Tibial artery (tissue), 4 donors: ENCODE measurements at regions of chr16 and their contacts with region 1.

Region 1: DNA sequence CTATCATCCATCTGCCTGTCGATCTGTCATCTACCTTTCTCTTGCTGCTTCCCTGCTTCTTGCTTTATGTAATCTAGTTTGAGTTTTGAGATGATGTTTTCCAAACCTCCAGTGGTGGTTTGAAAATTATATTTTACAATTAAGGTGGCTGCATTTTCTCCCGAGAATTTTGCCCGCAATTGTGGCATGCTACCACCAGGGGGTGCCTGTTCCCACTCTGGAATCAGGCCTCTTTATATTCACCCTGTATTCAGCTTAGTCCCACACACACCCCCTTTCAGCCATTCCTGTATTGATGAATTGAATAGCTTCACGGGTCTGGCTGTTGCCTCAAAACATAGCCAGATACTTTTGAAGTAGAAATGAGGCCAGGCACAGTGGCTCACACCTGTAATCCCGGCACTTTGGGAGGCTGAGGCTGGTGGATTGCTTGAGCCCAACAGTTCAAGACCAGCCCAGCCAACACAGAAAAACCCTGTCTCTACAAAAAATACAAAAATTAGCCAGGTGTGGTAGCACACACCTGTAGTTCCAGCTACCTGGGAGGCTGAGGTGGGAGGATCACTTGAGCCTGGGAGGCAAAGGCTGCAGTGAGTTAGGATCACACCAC is 3.2 kb downstream of the PRSS22 start:
- DNase-seq: no peak
- H3K4me3 ChIP-seq: no peak overlapping the region
- H3K27ac ChIP-seq: no peak overlapping the region
- H3K4me1 ChIP-seq: peaks cover 0 to 13% (median 1%) of the 10 kb centered on the region in 4 donors
- H3K27me3 ChIP-seq: peaks cover 0 to 69% of the 10 kb centered on the region in 2 donors
- CTCF ChIP-seq: no peak

Region 2: DNA sequence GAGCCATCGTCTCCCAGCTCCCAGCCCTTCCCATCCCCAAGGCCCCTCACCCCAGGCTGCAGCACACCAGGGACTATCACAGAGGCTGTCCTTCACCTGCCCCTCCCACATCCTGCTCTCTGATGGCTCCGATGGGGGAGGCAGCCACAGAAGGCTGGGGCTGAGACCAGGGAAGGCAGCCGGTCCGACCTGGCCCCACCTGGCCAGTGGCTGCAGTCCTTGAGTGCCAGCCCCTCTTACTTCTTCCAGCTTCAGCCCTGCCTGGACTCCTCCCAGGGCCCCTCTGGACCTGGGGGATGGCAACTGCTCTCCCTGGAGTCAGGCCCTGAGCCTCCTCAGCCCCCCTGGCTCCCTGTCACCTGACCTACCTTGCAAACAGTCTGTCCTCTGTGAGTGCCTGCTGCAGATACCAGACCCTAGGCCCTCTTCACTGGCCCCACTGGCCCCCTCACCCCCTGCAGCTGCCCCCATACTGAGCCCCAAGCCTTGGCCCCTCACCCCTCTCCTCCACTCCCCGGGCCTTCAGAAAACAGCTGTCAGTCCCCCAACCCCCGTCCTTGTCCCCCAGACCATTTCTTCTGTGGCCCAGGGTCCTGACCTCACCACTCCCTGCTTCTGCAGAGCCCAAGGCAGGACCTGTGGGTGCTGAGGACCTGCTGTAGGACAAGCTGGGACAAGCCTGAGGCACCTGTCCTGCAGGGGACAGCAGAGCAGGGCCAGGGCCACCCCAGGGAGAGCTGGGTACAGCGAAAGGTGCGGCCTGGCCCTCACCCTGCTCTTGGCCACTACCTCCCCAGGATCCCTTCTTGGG is 115.0 kb before region 1 on chr16:
- intact Hi-C with region 1: loop called (anchors 10 kb)
- DNase-seq: no peak
- H3K4me3 ChIP-seq: no peak overlapping the region
- H3K27ac ChIP-seq: no peak overlapping the region
- H3K4me1 ChIP-seq: no peaks in the 10 kb centered on the region
- H3K27me3 ChIP-seq: peaks cover 0 to 60% of the 10 kb centered on the region in 2 donors
- CTCF ChIP-seq: no peak